H1 (cell line): ENCODE measurements at regions of chr17 and their contacts with region 1.

Region 1: DNA sequence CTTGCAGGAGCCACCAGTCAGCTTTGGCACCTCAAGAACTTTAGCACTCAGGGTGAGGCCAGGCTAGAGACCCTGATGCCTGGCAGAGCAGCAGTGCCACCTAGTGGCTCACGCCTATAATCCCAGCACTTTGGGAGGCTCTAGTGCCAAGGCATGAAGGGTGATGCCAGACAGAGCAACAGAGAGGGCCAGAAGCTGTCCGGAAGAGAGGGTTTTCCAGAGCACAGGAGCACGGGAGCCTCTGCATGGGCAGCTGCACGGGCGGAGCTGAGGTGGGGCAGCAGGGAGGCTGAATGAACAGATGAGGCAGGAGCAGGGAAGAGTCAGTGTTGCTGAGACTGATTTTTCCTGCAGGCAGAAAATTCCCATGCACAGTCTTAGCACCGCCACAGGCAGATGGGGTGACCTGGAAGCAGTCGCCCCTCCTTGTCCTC is 38.9 kb downstream of the MYH3 start:
- DNase-seq: peak; percentile 51 to 79
- H3K4me3 ChIP-seq: no peak overlapping the region
- H3K27ac ChIP-seq: no peak overlapping the region
- H3K4me1 ChIP-seq: no peaks in the 10 kb centered on the region; a peak in 2 of 7 replicates
- H3K27me3 ChIP-seq: no peaks in the 10 kb centered on the region
- CTCF ChIP-seq: peak; percentile 95 to 97 (median 95)
- EP300 ChIP-seq: no peak
- POLR2A ChIP-seq: no peak
- RAD21 ChIP-seq: peak; percentile 94 to 95

Region 2: DNA sequence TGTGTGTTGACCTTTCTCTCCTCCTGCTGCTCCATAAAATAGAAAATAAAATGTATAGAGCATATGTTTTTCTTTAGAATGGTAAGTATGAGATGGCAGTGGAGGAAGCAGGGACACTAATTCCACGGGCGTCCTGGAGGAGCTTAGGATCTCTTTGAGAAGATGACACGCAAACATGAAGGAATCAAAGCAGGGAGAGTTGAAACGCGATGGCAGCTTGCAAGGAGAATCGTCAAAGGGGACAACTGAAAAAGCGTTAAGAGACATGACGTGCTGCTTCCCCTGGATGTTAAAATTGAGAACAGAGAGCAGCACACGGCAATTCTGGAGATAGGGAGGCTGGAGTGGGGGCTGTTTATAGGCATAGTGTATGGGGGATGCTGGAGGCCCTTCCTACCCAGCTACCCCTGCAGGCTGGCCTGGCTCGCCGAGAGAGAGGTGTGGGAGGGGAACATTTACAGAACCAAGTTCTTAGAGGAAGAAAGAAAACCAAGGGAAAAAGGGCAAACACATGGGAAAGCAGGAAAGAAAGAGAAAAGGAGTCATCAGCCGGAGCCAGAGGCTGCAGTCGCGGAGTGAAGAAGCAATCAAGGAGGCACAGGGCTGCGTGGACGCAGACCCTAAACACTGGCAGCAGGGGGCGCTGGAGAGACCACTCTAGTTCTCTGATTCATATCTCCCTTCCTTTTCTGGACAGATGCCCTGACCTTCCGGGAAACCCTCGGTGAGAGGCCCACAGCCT is 301.2 kb before region 1 on chr17:
- CTCF ChIA-PET with region 1: interaction called, 92 read pairs
- POLR2A ChIA-PET with region 1: interaction called, 4 read pairs
- DNase-seq: peak in 1 of 2 experiments; percentile 73
- H3K4me3 ChIP-seq: no peak overlapping the region
- H3K27ac ChIP-seq: no peak overlapping the region
- H3K4me1 ChIP-seq: no peaks in the 10 kb centered on the region; a peak in 1 of 7 replicates
- H3K27me3 ChIP-seq: no peaks in the 10 kb centered on the region
- CTCF ChIP-seq: peak; percentile 51 to 78 (median 74)
- EP300 ChIP-seq: no peak
- POLR2A ChIP-seq: no peak
- RAD21 ChIP-seq: peak; percentile 39 to 43

Region 3: DNA sequence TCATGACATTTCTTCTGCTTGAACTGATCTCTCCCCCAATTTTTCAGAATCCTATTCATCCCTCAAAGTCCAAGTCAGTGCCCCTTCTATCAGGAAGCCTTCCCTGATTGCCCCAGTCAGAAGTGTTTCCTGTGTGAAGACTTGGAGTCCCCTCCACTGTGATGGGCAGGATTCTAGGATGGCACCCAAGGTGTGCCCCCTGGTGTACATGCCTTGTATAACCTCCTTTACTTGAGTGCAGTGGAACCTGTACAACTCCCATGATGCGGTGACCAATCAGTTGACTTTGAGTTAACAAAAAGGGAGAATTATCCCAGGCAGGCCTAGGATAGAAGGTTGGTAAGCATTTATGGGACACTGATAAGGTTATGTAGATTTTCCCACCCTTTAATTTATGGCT is 268.8 kb before region 1 on chr17:
- CTCF ChIA-PET with region 1: interaction called, 25 read pairs
- POLR2A ChIA-PET with region 1: no interaction called
- DNase-seq: peak in 1 of 2 experiments; percentile 71
- H3K4me3 ChIP-seq: no peak overlapping the region
- H3K27ac ChIP-seq: no peak overlapping the region
- H3K4me1 ChIP-seq: no peaks in the 10 kb centered on the region
- H3K27me3 ChIP-seq: no peaks in the 10 kb centered on the region
- CTCF ChIP-seq: peak; percentile 52 to 75 (median 58)
- EP300 ChIP-seq: no peak
- POLR2A ChIP-seq: no peak
- RAD21 ChIP-seq: peak; percentile 51 to 63

Region 4: GRCh38 chr17:10417431-10417830 is 200.8 kb before region 1 on chr17:
- CTCF ChIA-PET with region 1: interaction called, 23 read pairs
- POLR2A ChIA-PET with region 1: no interaction called
- DNase-seq: no peak
- H3K4me3 ChIP-seq: no peak overlapping the region
- H3K27ac ChIP-seq: no peak overlapping the region
- H3K4me1 ChIP-seq: peaks cover 0 to 5% (median 1%) of the 10 kb centered on the region in 4 experiments; a peak in 3 of 7 replicates
- H3K27me3 ChIP-seq: no peaks in the 10 kb centered on the region
- CTCF ChIP-seq: no peak
- EP300 ChIP-seq: no peak
- POLR2A ChIP-seq: no peak
- RAD21 ChIP-seq: no peak

Region 5: GRCh38 chr17:10547351-10547750 is 70.9 kb before region 1 on chr17:
- CTCF ChIA-PET with region 1: interaction called, 10 read pairs
- POLR2A ChIA-PET with region 1: no interaction called
- DNase-seq: no peak
- H3K4me3 ChIP-seq: no peak overlapping the region
- H3K27ac ChIP-seq: no peak overlapping the region
- H3K4me1 ChIP-seq: peaks cover 3 to 12% (median 6%) of the 10 kb centered on the region in 4 experiments; a peak in 5 of 7 replicates
- H3K27me3 ChIP-seq: no peaks in the 10 kb centered on the region
- CTCF ChIP-seq: no peak
- EP300 ChIP-seq: no peak
- POLR2A ChIP-seq: no peak
- RAD21 ChIP-seq: no peak

Region 6: DNA sequence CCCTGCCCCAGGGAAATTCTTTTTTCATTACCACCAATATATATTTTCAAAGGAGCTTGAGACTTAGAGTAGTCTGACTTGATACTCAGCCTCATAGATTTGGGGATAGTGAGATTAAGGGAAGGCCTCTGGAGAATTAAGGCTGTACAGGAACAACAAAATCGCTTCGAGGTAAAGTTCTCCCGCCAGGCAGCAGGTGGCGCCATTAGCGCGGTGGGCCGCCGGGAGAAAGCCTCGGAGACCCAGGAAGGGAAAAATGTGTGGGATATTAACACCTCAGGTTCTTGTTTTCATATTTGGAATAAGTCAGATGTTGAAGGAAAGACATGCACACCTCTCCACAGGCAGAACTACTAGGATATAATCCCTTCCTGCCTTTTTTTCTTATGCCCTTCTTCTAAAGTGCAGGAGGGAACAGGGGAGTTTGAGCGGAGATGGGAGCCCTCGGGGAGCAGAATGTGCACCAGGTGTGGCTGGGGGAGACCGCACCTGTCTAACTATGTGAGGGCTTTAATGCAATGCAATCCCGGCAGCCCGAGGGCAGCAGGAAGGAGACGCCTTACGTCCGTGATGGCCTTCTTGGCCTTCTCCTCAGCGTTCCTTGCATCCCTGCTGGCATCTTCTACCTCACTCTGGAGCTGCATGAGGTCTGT is 13.0 kb after region 1 on chr17:
- CTCF ChIA-PET with region 1: interaction called, 323 read pairs
- POLR2A ChIA-PET with region 1: interaction called, 3 read pairs
- DNase-seq: peak in 1 of 2 experiments; percentile 85
- H3K4me3 ChIP-seq: no peak overlapping the region
- H3K27ac ChIP-seq: no peak overlapping the region
- H3K4me1 ChIP-seq: no peaks in the 10 kb centered on the region
- H3K27me3 ChIP-seq: no peaks in the 10 kb centered on the region
- CTCF ChIP-seq: peak; percentile 75 to 79 (median 78)
- EP300 ChIP-seq: no peak
- POLR2A ChIP-seq: no peak
- RAD21 ChIP-seq: peak; percentile 65 to 70

Region 7: DNA sequence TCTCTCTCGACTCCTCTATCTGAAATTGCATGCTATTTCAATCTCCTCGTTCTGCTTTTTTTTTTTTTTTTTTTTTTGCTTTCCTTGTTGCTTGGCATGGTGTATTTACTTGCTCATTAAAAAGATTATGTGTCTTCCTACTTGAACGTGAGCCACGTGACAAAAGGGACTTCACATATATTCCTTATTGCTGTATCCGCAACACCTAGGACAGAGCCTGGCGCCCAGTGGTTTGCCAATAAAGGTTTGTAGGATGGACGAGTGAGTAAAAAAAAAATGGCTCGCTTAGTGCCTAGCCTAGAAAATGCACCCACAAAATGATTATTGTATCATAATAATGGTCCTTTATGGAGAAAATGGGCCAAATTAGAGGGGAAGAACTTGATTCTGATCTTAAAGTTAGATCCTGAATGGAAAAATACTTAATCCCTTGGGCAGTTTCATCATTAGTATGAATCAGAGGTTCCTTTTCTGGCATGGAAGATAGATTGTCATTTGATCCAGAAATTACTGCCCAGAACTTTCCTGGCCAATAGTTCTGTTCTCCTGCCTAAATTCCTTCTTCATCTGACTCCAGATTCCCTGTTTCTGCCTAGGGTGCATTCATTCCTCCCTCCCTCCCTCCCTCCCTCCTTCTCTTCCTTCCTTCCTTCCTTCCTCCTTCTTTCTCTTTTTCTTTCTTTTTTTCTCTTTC is 125.2 kb after region 1 on chr17:
- CTCF ChIA-PET with region 1: no interaction called
- POLR2A ChIA-PET with region 1: no interaction called
- DNase-seq: no peak
- H3K4me3 ChIP-seq: no peak overlapping the region
- H3K27ac ChIP-seq: no peak overlapping the region
- H3K4me1 ChIP-seq: peaks cover 0 to 4% (median 2%) of the 10 kb centered on the region in 4 experiments; a peak in 3 of 7 replicates
- H3K27me3 ChIP-seq: no peaks in the 10 kb centered on the region
- CTCF ChIP-seq: no peak
- EP300 ChIP-seq: no peak
- POLR2A ChIP-seq: no peak
- RAD21 ChIP-seq: no peak